WTC11 (cell line): ENCODE measurements at regions of chr11 and their contacts with region 1.

Region 1: DNA sequence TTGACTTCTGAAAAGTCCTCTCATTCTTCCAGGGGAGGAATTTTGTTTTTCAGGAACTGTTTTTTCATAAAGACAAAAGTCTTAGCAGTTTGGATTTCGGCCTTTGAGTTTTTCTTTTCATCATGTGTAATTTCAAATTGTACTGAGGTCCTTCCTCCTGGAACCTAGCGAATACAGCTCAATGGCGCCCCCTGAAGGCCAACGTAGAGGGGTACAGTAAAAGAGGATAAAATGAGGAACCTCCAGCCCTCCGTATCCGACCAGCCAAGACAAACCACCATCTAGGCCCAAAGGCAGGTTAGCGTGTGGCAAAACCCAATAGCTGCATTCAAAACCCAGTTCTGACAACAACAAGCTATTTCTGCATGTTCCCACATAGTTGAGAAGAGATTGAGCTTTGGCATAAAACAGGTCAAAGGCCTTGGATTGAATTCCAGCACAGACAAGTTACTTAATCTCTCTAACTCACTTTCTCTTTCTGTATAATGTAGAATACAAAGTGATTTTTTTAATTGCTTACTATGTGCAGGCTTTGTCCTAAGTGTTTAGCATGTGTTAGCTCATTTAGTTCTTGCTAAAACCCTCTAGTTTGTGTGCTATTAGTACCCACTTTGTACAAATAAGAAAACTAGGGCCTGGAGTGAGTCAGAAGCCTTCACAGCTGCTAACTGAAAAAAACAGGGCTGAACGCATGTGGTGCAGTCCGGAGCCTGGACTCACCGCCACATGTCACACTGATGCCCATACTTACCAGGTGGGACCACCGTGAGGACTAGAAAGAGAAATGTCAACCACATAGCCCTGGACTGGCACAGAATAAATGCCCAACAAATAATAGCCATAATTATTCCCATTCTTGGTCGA is 43.2 kb upstream of the ETS1 start:
- DNase-seq: peak; percentile 86
- ATAC-seq: peak; percentile 75
- H3K4me3 Mint-ChIP-seq: no peak overlapping the region
- H3K27ac Mint-ChIP-seq: no peak overlapping the region
- H3K4me1 Mint-ChIP-seq: peaks cover 28% of the 10 kb centered on the region
- H3K27me3 Mint-ChIP-seq: no peaks in the 10 kb centered on the region; the same call in 1 of the 2 replicates
- CTCF ChIP-seq: peak; percentile 90

Region 2: DNA sequence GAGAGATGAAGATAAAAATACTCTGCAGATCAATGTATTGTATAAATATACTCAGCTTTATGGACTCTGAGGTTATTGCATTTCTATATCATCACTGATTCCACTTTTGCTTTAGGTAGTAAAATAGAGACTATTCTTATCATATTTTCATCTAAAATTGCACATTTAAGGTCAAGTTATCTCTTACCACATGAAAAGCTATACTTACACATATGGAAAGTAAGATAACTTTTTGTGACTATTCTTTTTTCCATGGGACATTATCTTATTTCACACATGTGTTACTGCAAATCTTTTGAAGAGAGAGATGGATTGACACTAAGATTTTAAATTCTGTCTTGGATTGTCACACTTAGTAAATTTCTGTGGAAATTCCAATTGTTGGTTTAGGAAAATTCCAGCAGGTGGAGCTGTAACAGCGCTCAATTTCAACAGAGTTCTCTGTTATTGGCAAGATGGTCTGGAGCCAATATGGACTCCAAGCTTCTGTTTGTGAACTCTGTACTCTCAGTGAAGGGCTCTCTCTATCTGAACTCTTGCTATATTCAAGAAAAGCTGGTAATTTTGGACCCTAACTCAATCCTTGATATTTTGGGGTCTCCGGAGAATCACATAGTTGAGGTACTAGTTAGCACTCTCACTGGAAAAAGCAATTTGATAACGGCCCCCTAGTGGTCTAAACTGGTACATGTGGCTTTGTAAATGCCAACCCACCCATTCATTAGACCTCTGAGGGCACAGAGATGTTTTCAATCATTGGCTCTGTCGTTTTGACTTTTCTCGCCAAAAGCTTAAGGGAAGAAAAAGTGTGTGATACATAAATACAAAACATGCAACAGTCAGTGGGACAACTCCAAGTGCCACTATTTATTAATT is 472.9 kb before region 1 on chr11:
- CTCF ChIA-PET with region 1: interaction called, 17 read pairs
- POLR2A ChIA-PET with region 1: no interaction called
- DNase-seq: peak; percentile 47
- ATAC-seq: peak; percentile 87
- H3K4me3 Mint-ChIP-seq: peak overlapping the region; percentile 49
- H3K27ac Mint-ChIP-seq: no peak overlapping the region
- H3K4me1 Mint-ChIP-seq: no peaks in the 10 kb centered on the region
- H3K27me3 Mint-ChIP-seq: no peaks in the 10 kb centered on the region; the same call in 1 of the 2 replicates
- CTCF ChIP-seq: peak; percentile 89

Region 3: GRCh38 chr11:128283451-128283850 is 347.1 kb before region 1 on chr11:
- CTCF ChIA-PET with region 1: interaction called, 49 read pairs
- POLR2A ChIA-PET with region 1: no interaction called
- DNase-seq: no peak
- ATAC-seq: no peak
- H3K4me3 Mint-ChIP-seq: no peak overlapping the region
- H3K27ac Mint-ChIP-seq: no peak overlapping the region
- H3K4me1 Mint-ChIP-seq: 0 out of 2 replicates have a peak, but pooled peaks cover 3% of the 10 kb centered on the region
- H3K27me3 Mint-ChIP-seq: no peaks in the 10 kb centered on the region
- CTCF ChIP-seq: no peak

Region 4: DNA sequence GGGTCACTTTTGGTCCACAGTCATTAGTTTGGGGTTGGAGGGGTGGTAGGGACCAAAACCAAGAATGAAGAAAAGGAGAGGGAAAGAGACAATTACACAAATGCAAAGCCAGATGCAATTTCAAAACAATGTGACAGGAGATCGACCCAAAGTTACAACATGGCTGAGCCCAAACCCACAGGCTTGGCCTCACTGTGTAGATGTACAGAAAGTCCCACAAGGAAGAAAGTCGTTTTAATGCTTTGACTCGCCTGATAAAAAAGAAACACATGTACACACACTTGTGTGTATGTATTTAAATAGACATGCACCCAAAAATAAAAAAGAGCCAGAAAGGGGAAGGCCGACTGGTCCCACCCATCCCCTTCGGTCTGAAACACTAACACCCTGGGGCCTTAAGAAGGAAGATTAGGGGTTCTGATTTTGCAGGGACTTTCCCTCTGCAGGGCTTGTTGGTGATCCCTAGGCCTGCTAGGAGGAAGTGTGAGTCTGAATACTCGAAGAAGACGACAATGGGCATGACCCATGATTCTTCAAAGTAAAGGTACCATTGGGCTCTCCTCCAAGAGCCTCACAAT is 147.3 kb before region 1 on chr11:
- CTCF ChIA-PET with region 1: interaction called, 15 read pairs
- POLR2A ChIA-PET with region 1: no interaction called
- DNase-seq: no peak
- ATAC-seq: no peak
- H3K4me3 Mint-ChIP-seq: no peak overlapping the region
- H3K27ac Mint-ChIP-seq: peak overlapping the region; percentile 42; the same call in 1 of the 2 replicates
- H3K4me1 Mint-ChIP-seq: no peaks in the 10 kb centered on the region; the same call in 1 of the 2 replicates
- H3K27me3 Mint-ChIP-seq: no peaks in the 10 kb centered on the region
- CTCF ChIP-seq: no peak

Region 5: GRCh38 chr11:128565881-128566280 is 64.7 kb before region 1 on chr11:
- CTCF ChIA-PET with region 1: no interaction called
- POLR2A ChIA-PET with region 1: no interaction called
- DNase-seq: no peak
- ATAC-seq: no peak
- H3K4me3 Mint-ChIP-seq: no peak overlapping the region
- H3K27ac Mint-ChIP-seq: no peak overlapping the region
- H3K4me1 Mint-ChIP-seq: peaks cover 43% of the 10 kb centered on the region
- H3K27me3 Mint-ChIP-seq: no peaks in the 10 kb centered on the region
- CTCF ChIP-seq: no peak

Region 6: GRCh38 chr11:128575961-128576350 is 54.6 kb before region 1 on chr11:
- CTCF ChIA-PET with region 1: interaction called, 10 read pairs
- POLR2A ChIA-PET with region 1: no interaction called
- DNase-seq: no peak
- ATAC-seq: no peak
- H3K4me3 Mint-ChIP-seq: no peak overlapping the region
- H3K27ac Mint-ChIP-seq: no peak overlapping the region
- H3K4me1 Mint-ChIP-seq: peaks cover 81% of the 10 kb centered on the region
- H3K27me3 Mint-ChIP-seq: no peaks in the 10 kb centered on the region
- CTCF ChIP-seq: no peak

Region 7: GRCh38 chr11:128701086-128701485 is 70.5 kb after region 1 on chr11:
- CTCF ChIA-PET with region 1: no interaction called
- POLR2A ChIA-PET with region 1: no interaction called
- DNase-seq: no peak
- ATAC-seq: no peak
- H3K4me3 Mint-ChIP-seq: no peak overlapping the region
- H3K27ac Mint-ChIP-seq: no peak overlapping the region
- H3K4me1 Mint-ChIP-seq: peaks cover 5% of the 10 kb centered on the region; the same call in 1 of the 2 replicates
- H3K27me3 Mint-ChIP-seq: peaks cover 36% of the 10 kb centered on the region
- CTCF ChIP-seq: no peak

Region 8: DNA sequence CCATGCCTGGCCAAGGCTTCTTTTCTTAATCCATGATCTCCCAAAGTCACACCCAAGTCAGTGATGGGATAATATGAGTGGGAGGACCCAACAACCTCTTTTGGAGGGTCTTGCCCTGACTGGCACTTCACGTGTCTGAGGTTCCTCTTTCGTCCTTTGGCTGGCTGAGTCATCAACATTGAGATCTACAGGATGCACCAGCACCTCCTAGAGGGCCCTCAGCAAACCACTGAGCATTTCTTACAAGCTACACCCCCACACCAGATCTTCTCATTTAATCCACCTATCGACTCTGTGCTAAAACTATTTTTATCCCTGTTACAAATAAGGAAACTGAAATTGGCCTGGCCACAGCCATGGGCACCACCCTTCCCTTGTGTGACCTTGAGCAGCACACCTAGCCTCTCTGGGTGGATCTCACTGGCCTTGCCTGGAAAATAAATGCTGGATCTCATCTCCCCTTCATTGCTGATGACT is 126.7 kb after region 1 on chr11:
- CTCF ChIA-PET with region 1: interaction called, 12 read pairs
- POLR2A ChIA-PET with region 1: no interaction called
- DNase-seq: peak; percentile 36
- ATAC-seq: peak; percentile 76
- H3K4me3 Mint-ChIP-seq: no peak overlapping the region
- H3K27ac Mint-ChIP-seq: no peak overlapping the region
- H3K4me1 Mint-ChIP-seq: peaks cover 26% of the 10 kb centered on the region
- H3K27me3 Mint-ChIP-seq: peaks cover 3% of the 10 kb centered on the region
- CTCF ChIP-seq: no peak

Region 9: DNA sequence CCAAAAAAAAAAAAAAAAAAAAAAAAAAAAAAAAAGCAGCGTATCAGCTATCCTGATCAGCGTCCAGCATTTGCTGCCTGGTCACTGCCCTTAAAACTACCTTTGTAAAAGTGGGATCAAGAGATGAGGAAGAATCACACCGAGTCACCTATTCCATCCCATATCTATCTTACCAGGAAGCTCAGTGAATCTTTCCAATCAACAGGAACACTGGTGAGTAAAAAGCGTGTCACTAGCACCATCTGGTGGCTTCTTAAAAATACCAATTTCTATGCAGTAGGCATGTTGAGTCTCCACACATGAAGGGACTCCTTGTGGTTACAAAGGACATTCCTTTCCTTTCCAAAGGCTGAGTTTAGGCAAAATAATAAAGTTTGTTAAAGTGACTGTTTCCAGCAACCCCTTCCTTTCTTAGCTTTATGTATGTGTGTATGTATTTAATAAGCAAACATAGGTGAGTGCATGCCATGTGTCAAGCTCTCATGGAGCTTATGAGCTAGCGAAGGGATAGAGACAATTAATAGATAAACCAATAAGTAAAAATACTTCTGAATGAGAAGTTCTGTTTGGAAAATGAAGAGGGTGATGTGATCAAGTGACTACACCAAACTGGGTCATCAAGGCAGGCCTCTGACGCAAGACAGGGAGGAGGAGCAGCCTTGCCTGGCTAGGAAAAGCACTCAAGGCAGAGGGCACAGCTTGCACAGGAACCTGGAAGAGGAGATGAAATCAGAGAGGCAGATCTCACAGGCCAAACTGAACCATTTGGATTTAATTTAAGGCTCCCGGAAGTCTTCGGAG is 326.0 kb after region 1 on chr11:
- CTCF ChIA-PET with region 1: interaction called, 10 read pairs
- POLR2A ChIA-PET with region 1: no interaction called
- DNase-seq: no peak
- ATAC-seq: peak; percentile 88
- H3K4me3 Mint-ChIP-seq: no peak overlapping the region
- H3K27ac Mint-ChIP-seq: no peak overlapping the region
- H3K4me1 Mint-ChIP-seq: no peaks in the 10 kb centered on the region
- H3K27me3 Mint-ChIP-seq: peaks cover 12% of the 10 kb centered on the region
- CTCF ChIP-seq: peak; percentile 41